ENCODE measurements at regions of chr16 and their contacts with region 1.

Region 1: GRCh38 chr16:75198135-75198600 is 8.8 kb downstream of the CTRB2 start:
- DNase-seq: peak in 1 of 3 donors; percentile 11
- H3K4me3 ChIP-seq: no peak overlapping the region
- H3K27ac ChIP-seq: no peak overlapping the region
- H3K4me1 ChIP-seq: peaks cover 0 to 10% (median 4%) of the 10 kb centered on the region in 4 experiments
- H3K27me3 ChIP-seq: peaks cover 0 to 47% (median 16%) of the 10 kb centered on the region in 5 experiments

Region 2: DNA sequence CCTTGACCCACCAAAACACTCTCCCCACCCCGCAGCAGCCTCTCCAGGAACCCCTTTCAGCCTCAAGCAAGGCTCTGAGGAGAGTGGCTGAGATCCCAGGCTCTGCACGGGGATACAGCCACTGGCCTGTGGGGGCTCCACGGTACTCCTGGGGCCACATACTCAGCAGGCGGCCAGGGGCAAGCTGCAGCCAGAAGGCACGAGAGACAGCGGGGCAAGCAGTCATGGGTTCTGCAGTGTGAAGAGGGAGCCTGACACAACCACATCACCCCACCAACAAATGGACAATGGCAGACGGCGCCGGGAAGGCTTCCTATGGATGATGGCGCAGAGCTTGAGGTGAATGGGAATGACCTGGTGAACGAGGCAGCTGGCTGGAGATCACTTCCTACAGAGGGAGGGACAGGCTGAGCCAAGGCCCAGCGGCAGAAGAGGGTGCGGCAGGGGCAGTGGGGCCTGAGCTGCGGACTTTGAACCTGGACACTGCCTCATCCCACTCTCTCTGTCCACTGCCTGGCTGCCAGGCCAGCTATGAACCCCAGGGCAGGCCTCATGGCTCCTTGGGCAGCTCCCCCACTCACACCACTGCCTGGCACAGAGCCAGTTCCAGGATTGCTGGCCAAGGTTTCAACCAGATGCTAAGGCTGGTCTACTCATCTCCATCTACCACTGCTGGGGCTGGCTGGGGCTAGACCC is 64.1 kb after region 1 on chr16:
- CTCF ChIA-PET with region 1: no interaction called
- POLR2A ChIA-PET with region 1: no interaction called
- DNase-seq: no peak
- H3K4me3 ChIP-seq: no peak overlapping the region
- H3K27ac ChIP-seq: no peak overlapping the region
- H3K4me1 ChIP-seq: peaks cover 0 to 15% (median 13%) of the 10 kb centered on the region in 4 experiments
- H3K27me3 ChIP-seq: peaks cover 0 to 95% (median 34%) of the 10 kb centered on the region in 5 experiments

Region 3: DNA sequence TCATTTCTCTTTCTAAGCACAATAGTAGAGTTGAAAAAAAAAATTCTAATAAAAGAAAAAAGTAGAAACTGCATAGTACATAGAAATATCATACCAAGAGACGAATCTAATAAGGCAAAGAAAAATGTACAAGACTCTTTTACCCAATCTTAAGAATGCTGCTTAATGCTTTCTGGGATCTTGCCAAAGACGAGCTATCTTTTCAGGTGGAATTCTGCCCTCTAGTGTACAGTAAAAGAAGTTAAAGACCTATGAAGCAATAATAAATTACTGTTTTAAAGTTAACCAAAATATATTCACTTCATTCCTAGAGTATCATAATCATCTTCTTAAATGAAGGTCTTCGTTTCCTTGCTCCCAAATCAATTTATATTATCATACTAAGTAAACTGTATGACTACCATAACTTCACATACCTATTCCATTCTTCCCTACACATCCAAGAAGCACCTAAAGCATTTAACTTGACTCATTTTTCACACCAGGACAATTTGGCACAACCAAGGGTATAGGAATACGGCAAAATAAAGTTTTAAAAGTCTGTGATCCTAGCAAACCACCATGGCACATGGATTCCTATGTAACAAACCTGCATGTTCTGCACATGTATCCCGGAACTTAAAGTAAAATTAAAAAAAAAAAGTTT is 187.5 kb after region 1 on chr16:
- CTCF ChIA-PET with region 1: interaction called, 11 read pairs
- POLR2A ChIA-PET with region 1: no interaction called
- DNase-seq: peak; percentile 88 to 96 (median 93)
- H3K4me3 ChIP-seq: no peak overlapping the region
- H3K27ac ChIP-seq: no peak overlapping the region
- H3K4me1 ChIP-seq: peaks cover 0 to 4% (median 2%) of the 10 kb centered on the region in 4 experiments
- H3K27me3 ChIP-seq: peaks cover 0 to 50% (median 21%) of the 10 kb centered on the region in 5 experiments

Region 4: GRCh38 chr16:75402821-75403475 is 204.8 kb after region 1 on chr16:
- CTCF ChIA-PET with region 1: interaction called, 31 read pairs
- POLR2A ChIA-PET with region 1: no interaction called
- DNase-seq: peak; percentile 44 to 65 (median 58)
- H3K4me3 ChIP-seq: no peak overlapping the region
- H3K27ac ChIP-seq: no peak overlapping the region
- H3K4me1 ChIP-seq: peaks cover 0 to 10% (median 4%) of the 10 kb centered on the region in 4 experiments
- H3K27me3 ChIP-seq: no peaks in the 10 kb centered on the region